Cardiac septum (tissue), 1 donor: ENCODE measurements at regions of chr15 and their contacts with region 1.

Region 1: GRCh38 chr15:68637767-68638404 is 59.1 kb downstream of the CORO2B start:
- DNase-seq: no peak

Region 2: GRCh38 chr15:68586274-68586961 is 51.5 kb before region 1 on chr15:
- intact Hi-C with region 1: loop called (anchors 10 kb)
- DNase-seq: no peak